ENCODE measurements at regions of chr3 and their contacts with region 1.

Region 1: DNA sequence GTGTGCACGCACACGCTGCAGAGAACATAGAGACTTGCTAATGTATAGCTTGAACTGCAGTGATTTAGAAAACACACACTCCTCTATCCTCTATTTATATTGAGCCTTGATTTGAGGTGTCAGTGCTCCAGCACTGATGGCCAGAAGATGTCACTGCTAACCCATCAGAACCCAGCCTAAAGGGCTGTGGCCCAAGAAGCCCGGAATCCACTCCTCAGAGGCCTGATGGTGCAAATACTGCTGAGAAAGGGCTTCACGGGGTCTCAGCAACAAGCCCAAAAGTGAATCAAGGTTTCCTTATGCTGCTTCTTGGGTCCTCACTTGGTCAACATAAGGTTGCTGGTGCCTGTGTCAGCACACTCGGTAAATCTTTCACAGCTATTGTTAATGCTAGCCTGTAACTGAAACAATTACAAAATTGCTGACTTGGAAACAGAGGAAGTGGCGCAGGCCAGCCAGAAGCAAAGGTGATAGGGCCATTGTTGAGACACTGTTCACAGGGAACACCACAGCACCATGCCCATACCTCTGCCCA is 60.3 kb downstream of the HEG1 start:
- DNase-seq: no peak
- ATAC-seq: peak; percentile 81

Region 2: GRCh38 chr3:125051715-125052581 is 56.4 kb after region 1 on chr3:
- intact Hi-C with region 1: no loop called
- DNase-seq: peak; percentile 74
- ATAC-seq: peak; percentile 30

Region 3: DNA sequence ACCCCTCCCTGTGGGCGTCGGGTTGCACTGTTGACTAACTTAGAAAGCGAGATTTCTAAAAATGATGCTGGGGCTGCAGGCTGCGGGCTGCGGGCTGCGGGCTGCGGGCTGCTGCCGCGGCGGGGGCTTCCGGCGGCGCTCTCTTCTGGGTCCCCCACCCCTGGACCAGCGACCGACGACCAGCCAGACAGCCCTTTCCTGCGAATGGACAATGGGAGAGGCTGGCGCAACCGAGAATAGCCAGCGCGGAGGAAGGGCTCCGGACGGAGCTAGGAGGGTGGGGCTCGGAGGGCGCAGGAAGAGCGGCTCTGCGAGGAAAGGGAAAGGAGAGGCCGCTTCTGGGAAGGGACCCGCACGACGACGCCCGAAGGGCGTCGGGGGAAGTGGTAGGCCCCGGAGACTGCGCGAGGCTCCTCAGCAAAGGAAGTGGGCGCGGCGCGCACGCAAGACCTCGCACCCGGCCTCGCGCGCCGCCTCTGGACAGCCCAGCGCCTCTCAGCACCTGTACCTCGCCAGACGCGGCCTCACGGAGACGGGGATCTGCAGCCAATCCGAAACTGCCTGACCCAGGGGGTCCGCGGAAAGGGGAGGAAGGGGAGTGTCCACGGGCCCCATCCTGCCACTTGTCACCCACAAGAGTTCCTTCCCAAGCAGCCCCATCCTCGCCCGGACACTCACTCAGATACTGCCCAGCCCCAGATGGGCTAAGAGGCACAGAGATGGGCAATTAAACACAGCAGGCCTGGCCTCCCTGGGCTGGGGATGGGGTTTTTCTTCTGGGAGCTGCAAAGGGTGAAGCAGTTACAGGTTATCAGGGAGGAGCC is 146.3 kb after region 1 on chr3:
- intact Hi-C with region 1: loop called (anchors 5 kb)
- DNase-seq: peak; percentile 88
- ATAC-seq: peak; percentile 74

Region 4: DNA sequence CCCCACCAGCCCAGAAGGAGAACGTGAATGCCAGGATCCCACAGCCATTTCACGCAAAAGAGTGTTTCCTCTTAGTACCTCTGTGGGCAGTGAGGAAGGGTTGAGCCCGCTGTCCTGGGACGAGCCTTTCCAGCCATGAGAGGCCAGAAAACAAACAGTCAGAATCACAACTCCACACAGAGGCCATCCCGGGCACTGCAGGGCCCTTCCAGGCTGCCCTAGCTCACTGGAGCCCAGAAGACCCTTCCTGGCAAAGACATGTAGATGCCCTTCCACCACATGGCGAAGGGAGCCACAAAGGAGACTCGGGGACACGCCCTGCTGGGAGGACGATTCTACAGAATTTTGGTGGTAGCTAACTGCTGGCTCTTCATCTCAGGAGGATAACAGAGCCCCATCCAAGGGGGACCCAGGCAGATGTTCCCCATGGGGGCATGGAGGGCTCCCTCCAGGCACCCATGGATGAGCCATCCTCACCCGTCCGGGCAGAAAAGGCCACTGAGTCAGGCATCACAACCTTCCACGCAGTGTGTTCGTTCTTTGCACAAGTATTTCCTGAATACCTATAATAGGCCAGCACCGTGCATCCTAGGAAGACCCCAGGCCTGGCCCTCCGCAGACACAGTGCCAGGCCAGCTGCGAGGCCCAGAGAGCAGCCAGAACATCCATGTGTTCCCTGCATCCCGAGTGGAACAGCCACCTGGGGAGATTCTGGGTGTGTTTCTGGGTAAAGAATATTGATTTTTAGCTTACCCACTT is 169.8 kb after region 1 on chr3:
- intact Hi-C with region 1: loop called (anchors 2 kb)
- DNase-seq: no peak
- ATAC-seq: peak; percentile 89

Region 5: GRCh38 chr3:125374996-125375941 is 379.7 kb after region 1 on chr3 and contains the start of gene ZNF148:
- intact Hi-C with region 1: loop called (anchors 10 kb)
- DNase-seq: peak; percentile 98
- ATAC-seq: peak; percentile 100
- total RNA-seq, gene ZNF148: 43.7 TPM

Region 6: DNA sequence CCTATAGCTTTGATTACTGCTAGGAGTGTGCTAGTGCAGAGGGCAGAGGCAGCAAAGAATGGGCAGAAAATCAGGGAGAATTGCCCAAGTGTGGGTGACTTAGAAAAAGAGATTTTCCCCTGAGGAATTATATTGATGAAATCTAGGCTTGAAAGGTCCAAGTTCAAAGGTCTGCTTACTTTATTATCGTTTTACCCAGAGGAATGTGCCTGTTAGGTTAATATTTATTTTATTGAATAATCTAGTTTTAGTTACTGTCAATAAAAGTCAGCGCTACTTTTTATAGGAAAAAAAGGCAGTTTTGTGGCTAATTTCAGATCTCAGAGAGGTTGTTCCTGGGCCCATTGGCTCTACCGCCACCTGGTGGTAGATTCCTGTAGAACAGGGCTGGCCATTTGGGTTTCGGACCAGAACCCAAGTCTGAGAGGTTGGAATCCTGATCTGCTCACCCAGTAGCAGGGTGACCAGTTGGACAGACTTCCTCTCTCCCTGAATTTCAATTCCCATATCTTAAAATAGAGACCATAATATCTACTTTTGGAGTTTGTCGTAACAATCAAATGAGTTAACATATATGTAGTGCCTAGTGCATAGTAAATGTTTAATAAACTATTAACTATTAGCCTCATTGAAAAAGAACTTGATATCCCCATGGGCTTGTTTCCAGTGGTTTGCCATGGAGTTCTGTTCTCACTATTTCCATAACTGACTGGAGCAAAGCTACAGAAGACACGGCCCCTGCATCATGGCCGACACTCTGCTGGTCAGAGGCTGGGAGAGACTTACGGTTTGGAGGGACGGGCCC is 442.3 kb after region 1 on chr3:
- intact Hi-C with region 1: loop called (anchors 2 kb)
- DNase-seq: no peak
- ATAC-seq: peak; percentile 56